PC-3 (cell line): ENCODE measurements at regions of chr7 and their contacts with region 1.

Region 1: DNA sequence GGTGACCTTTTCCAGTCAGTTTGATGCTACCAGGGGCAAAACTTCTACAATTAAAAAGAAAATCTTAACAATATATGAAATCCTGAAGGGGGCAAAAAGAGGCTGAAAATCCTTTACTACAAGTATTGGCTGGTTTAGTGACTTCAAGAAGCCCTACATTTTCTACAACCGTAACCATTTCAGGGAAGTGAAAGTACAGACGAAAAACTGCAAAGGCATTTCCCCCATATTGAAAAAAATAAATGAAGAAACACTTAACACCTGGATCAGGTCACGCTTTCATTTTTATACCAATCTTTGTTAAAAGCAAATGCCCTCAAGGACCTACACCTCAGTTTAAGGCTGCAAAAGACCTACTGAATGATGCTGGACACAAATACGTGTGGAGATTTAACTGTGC is 38.6 kb downstream of the IL6 start:
- DNase-seq: no peak
- ATAC-seq: no peak
- H3K4me3 ChIP-seq: no peak overlapping the region
- H3K27ac ChIP-seq: no peak overlapping the region
- H3K4me1 ChIP-seq: no peaks in the 10 kb centered on the region
- H3K27me3 ChIP-seq: no peaks in the 10 kb centered on the region
- CTCF ChIP-seq: no peak

Region 2: GRCh38 chr7:22782616-22783232 is 17.1 kb after region 1 on chr7:
- CTCF ChIA-PET with region 1: no interaction called
- POLR2A ChIA-PET with region 1: interaction called, 15 read pairs
- intact Hi-C with region 1: no loop called
- DNase-seq: peak; percentile 73
- ATAC-seq: peak; percentile 95
- H3K4me3 ChIP-seq: no peak overlapping the region
- H3K27ac ChIP-seq: no peak overlapping the region
- H3K4me1 ChIP-seq: no peaks in the 10 kb centered on the region
- H3K27me3 ChIP-seq: no peaks in the 10 kb centered on the region
- CTCF ChIP-seq: peak; percentile 89